ENCODE measurements at regions of chr17 and their contacts with region 1.

Region 1: GRCh38 chr17:14337596-14338079 is 36.8 kb downstream of the HS3ST3B1 start:
- DNase-seq: no peak
- H3K4me3 Mint-ChIP-seq: peak overlapping the region; percentile 20
- H3K27ac Mint-ChIP-seq: peak overlapping the region; percentile 81
- H3K4me1 Mint-ChIP-seq: peaks cover 46% of the 10 kb centered on the region
- H3K27me3 Mint-ChIP-seq: no peaks in the 10 kb centered on the region

Region 2: DNA sequence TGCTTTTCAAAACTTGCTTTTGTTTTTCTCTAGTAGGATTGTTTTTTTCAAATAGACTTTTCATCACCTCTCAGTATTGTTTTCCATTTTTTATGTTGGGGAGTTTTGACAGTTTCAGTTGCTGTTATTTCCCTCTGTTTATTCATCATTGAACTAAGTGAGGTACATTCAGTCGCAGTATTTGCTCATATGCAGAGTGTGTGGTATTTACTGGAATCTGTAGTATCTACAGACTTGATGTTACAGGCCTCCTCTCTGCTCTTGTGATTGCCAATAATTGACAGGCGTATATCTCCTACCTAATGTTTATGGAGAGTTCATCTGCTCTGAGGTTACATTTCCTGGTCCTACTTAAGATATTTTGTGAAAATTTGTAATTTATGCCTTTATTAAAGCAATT is 218.7 kb before region 1 on chr17:
- intact Hi-C with region 1: loop called (anchors 1 kb)
- DNase-seq: no peak
- H3K4me3 Mint-ChIP-seq: peak overlapping the region; percentile 59
- H3K27ac Mint-ChIP-seq: peak overlapping the region; percentile 92
- H3K4me1 Mint-ChIP-seq: peaks cover 78% of the 10 kb centered on the region
- H3K27me3 Mint-ChIP-seq: no peaks in the 10 kb centered on the region

Region 3: DNA sequence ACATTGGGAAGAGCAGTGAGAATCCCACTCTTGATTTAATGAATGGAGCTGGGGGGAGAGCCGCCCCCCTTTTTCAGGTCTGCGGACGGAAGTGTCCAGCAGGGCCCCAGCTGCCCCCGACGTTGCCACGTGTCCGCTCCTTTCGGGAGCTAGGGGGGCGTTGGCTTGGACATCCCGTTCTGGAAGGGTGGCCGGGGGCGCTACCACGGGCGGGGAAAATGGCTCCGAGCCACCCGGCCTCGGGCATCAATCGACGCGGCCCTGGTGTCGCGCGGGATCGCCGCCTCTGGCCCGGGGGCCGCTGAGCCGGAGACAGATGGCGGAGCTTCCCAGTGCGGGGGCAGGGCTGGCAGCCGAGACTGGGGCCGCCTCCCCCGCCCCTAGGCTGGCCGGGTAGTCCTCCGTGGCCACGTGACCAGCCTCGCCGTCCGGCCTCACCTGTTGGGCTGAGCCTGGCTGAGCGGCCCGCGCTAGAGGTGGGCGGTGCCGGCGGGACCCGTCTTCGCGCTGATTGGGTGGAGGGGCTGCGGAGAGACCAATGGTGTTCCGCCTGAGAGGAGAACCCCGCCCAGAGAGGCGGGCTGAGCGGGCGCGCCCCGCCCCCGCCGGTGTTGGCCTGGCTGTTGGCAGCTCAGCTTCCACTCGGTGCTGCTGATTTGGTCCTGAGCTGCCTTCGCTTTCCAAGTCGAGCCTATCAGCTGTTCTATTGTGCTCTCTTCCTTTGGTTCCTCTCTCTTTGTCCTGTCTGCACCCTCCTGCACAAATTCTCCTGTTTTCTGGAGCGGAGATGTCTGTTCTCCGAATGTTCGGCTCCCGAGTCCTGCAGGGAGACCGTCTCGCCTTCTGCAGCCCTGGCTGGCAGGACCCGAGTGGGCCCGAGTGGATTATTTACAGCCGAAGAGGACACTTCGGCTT is 28.4 kb before region 1 on chr17:
- intact Hi-C with region 1: loop called (anchors 1 kb)
- DNase-seq: peak; percentile 86
- H3K4me3 Mint-ChIP-seq: peak overlapping the region; percentile 74
- H3K27ac Mint-ChIP-seq: peak overlapping the region; percentile 33
- H3K4me1 Mint-ChIP-seq: peaks cover 49% of the 10 kb centered on the region
- H3K27me3 Mint-ChIP-seq: no peaks in the 10 kb centered on the region

Region 4: DNA sequence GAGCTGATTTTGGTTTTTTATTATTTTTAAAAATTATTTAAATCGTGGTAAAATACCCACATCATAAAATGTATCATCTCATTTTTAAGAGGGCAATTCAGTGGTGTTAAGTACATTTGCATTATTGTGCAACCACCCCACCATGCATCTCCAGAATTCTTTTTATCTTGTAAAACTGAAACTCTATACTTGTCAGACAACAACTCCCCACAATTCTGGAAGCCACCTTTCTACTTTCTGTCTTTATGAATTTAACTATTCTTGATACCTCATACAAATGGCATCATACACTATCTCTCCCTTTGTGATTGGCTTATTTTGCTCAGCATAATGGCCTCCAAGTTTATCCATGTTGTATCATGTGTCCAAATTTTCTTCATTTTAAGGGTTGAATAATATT is 61.1 kb after region 1 on chr17:
- intact Hi-C with region 1: loop called (anchors 1 kb)
- DNase-seq: no peak
- H3K4me3 Mint-ChIP-seq: no peak overlapping the region
- H3K27ac Mint-ChIP-seq: no peak overlapping the region
- H3K4me1 Mint-ChIP-seq: peaks cover 7% of the 10 kb centered on the region
- H3K27me3 Mint-ChIP-seq: no peaks in the 10 kb centered on the region

Region 5: GRCh38 chr17:14427900-14428647 is 90.4 kb after region 1 on chr17:
- intact Hi-C with region 1: loop called (anchors 1 kb)
- DNase-seq: peak; percentile 28
- H3K4me3 Mint-ChIP-seq: peak overlapping the region; percentile 54
- H3K27ac Mint-ChIP-seq: peak overlapping the region; percentile 82
- H3K4me1 Mint-ChIP-seq: peaks cover 32% of the 10 kb centered on the region
- H3K27me3 Mint-ChIP-seq: no peaks in the 10 kb centered on the region